Kidney (tissue), 22 donors: ENCODE measurements at regions of chr22 and their contacts with region 1.

Region 1: DNA sequence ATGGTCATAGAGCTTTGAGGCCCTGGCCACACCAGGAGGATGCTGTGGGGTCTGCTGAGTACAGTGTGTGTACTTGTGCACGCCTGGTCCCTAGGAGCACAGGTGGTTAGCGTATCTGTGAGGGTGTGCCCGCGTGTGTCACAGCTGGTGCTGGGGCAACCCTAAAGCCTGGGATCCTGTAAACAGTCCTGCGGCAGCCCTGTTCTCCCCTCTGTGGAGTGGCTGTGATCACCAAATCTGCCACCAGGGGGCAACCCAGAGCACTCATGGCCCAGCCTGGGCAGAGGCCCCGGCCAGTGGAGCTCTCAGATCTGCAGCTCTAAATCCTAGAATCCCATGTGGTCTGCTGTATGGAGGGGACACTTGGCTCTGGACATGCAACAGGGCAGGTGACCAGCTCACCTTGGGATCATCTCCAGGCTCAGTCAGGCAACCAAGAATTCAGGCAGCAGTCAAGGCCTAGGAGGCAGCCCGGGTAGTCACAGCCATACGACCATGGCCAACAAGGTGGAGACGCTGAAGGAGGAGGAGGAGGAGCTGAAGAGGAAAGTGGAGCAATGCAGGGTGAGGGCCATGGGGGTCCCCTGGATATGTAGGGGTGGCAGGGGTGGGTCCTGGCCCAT is 3.9 kb downstream of the SH3BP1 start:
- DNase-seq: peak; percentile 85 to 93 (median 88)
- H3K4me3 ChIP-seq: no peak overlapping the region
- H3K27ac ChIP-seq: no peak overlapping the region
- H3K4me1 ChIP-seq: peaks cover 0 to 14% (median 0%) of the 10 kb centered on the region in 3 donors
- H3K27me3 ChIP-seq: no peaks in the 10 kb centered on the region
- CTCF ChIP-seq: peak; percentile 90

Region 2: GRCh38 chr22:37681556-37682049 is 38.3 kb after region 1 on chr22:
- intact Hi-C with region 1: loop called (anchors 5 kb)
- DNase-seq: peak; percentile 71 to 87 (median 82)
- H3K4me3 ChIP-seq: no peak overlapping the region
- H3K27ac ChIP-seq: no peak overlapping the region
- H3K4me1 ChIP-seq: peaks cover 0 to 4% (median 0%) of the 10 kb centered on the region in 3 donors
- H3K27me3 ChIP-seq: no peaks in the 10 kb centered on the region
- CTCF ChIP-seq: peak; percentile 77

Region 3: DNA sequence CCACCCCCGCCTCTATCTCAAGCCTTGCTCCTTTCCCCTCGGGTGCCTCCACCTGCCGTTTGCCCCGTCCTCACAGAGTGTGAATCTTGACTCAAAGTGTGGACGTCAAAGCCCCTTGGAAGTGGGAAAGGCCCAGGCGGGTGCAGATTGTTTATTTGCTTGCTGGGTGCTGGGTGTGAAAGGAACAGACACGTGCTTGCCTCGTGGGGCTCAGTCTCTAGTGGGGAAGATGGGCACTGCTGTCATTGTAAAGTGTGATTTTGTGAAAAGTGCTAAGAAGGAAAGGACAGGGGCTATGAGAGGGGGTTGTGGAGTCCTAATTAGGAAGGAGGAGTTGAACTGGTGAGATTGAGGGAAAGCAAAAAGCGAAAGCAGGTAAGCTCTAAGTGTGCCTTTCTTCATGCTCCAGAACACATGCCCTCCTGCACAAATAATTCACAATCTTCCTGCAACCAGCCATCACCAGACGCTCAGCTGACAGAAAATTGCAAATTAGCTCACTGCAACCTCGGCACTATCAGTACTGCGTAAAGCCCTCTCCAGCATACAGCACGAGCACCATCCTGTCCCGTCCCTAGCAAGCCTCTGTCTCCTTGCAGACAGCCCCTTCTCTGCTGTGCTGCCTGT is 154.7 kb after region 1 on chr22:
- intact Hi-C with region 1: loop called (anchors 10 kb)
- DNase-seq: peak in 2 of 5 donors; percentile 37 to 61
- H3K4me3 ChIP-seq: peak overlapping the region in 1 of 3 donors; percentile 37
- H3K27ac ChIP-seq: no peak overlapping the region
- H3K4me1 ChIP-seq: peaks cover 0 to 5% (median 1%) of the 10 kb centered on the region in 3 donors
- H3K27me3 ChIP-seq: no peaks in the 10 kb centered on the region
- CTCF ChIP-seq: no peak